Heart right ventricle (tissue), 16 donors: ENCODE measurements at regions of chr14 and their contacts with region 1.

Region 1: DNA sequence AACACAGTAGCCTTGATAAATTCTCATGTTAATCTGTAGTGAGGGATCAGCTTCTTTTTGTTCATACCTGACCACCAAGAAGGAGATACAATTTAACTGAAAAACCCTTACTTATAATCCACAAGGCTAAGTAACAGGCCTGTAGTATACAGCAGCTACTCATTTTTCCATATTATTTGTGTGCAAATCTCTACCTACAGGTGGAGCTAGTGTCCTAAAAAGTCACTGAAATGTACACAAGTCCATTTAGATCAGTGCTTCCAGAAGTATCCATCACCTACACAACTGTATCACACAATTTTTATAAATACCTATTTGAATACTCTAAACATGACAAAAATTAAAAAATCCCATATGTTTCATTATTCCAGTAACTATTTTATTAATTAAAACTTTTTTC is 173.2 kb downstream of the SLC35F4 start:
- DNase-seq: no peak
- ATAC-seq: no peak
- H3K4me3 ChIP-seq: no peak overlapping the region
- H3K27ac ChIP-seq: no peak overlapping the region
- H3K4me1 ChIP-seq: no peaks in the 10 kb centered on the region
- H3K27me3 ChIP-seq: peaks cover 0 to 7% (median 0%) of the 10 kb centered on the region in 7 donors
- CTCF ChIP-seq: peak in 7 of 9 donors; percentile 27 to 56 (median 33)

Region 2: GRCh38 chr14:57918791-57919190 is 226.1 kb after region 1 on chr14:
- intact Hi-C with region 1: no loop called
- DNase-seq: no peak
- ATAC-seq: no peak
- H3K4me3 ChIP-seq: no peak overlapping the region
- H3K27ac ChIP-seq: no peak overlapping the region
- H3K4me1 ChIP-seq: no peaks in the 10 kb centered on the region
- H3K27me3 ChIP-seq: no peaks in the 10 kb centered on the region
- CTCF ChIP-seq: no peak

Region 3: GRCh38 chr14:57987596-57988300 is 295.1 kb after region 1 on chr14:
- intact Hi-C with region 1: no loop called
- DNase-seq: no peak
- ATAC-seq: no peak
- H3K4me3 ChIP-seq: no peak overlapping the region
- H3K27ac ChIP-seq: no peak overlapping the region
- H3K4me1 ChIP-seq: no peaks in the 10 kb centered on the region
- H3K27me3 ChIP-seq: peaks cover 0 to 4% (median 0%) of the 10 kb centered on the region in 7 donors
- CTCF ChIP-seq: no peak

Region 4: GRCh38 chr14:58072288-58073071 is 379.8 kb after region 1 on chr14:
- intact Hi-C with region 1: loop called in 5 of 10 experiments (anchors 5 to 10 kb)
- DNase-seq: peak in 1 of 2 donors; percentile 62
- ATAC-seq: peak in 7 of 8 donors; percentile 76 to 84 (median 79)
- H3K4me3 ChIP-seq: peak overlapping the region in 6 of 10 donors; percentile 9 to 42 (median 36)
- H3K27ac ChIP-seq: no peak overlapping the region
- H3K4me1 ChIP-seq: peaks cover 0 to 14% (median 7%) of the 10 kb centered on the region in 9 donors
- H3K27me3 ChIP-seq: no peaks in the 10 kb centered on the region
- CTCF ChIP-seq: peak; percentile 56 to 88 (median 74)

Region 5: GRCh38 chr14:58331111-58331510 is 638.4 kb after region 1 on chr14:
- intact Hi-C with region 1: loop called in 1 of 10 experiments (anchors 5 kb)
- DNase-seq: peak; percentile 50 to 94
- ATAC-seq: peak; percentile 73 to 97 (median 86)
- H3K4me3 ChIP-seq: peak overlapping the region in 4 of 10 donors; percentile 2 to 24 (median 8)
- H3K27ac ChIP-seq: peak overlapping the region in 5 of 10 donors; percentile 3 to 50 (median 43)
- H3K4me1 ChIP-seq: peaks cover 0 to 16% (median 12%) of the 10 kb centered on the region in 9 donors
- H3K27me3 ChIP-seq: no peaks in the 10 kb centered on the region
- CTCF ChIP-seq: no peak